ENCODE measurements at regions of chr2 and their contacts with region 1.

Region 1: GRCh38 chr2:86035883-86036668 is 69.6 kb downstream of the POLR1A start:
- DNase-seq: peak; percentile 65
- H3K4me3 Mint-ChIP-seq: peak overlapping the region; percentile 76
- H3K27ac Mint-ChIP-seq: peak overlapping the region; percentile 93
- H3K4me1 Mint-ChIP-seq: peaks cover 74% of the 10 kb centered on the region
- H3K27me3 Mint-ChIP-seq: no peaks in the 10 kb centered on the region

Region 2: DNA sequence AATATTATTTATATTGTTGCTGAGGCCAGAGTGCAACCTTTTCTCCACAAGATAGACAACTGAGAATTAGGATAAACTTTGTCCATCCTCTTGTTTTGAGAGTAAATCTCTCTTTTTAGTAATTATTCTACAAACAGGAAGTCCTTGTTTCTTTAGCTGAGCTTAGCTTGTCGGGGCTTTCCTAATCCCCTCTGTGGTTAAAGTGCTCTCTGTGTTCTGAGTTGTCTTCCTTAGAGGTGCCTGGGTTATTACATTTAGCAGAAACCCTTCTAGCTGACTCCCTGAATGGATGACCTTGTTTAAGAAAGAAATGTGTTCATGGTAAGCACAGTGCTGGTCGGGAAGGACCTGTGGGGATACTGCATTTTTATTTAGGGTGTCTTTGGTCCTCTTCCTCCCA is 407.4 kb before region 1 on chr2:
- intact Hi-C with region 1: no loop called
- DNase-seq: no peak
- H3K4me3 Mint-ChIP-seq: peak overlapping the region; percentile 33
- H3K27ac Mint-ChIP-seq: peak overlapping the region; percentile 79
- H3K4me1 Mint-ChIP-seq: peaks cover 25% of the 10 kb centered on the region
- H3K27me3 Mint-ChIP-seq: no peaks in the 10 kb centered on the region

Region 3: DNA sequence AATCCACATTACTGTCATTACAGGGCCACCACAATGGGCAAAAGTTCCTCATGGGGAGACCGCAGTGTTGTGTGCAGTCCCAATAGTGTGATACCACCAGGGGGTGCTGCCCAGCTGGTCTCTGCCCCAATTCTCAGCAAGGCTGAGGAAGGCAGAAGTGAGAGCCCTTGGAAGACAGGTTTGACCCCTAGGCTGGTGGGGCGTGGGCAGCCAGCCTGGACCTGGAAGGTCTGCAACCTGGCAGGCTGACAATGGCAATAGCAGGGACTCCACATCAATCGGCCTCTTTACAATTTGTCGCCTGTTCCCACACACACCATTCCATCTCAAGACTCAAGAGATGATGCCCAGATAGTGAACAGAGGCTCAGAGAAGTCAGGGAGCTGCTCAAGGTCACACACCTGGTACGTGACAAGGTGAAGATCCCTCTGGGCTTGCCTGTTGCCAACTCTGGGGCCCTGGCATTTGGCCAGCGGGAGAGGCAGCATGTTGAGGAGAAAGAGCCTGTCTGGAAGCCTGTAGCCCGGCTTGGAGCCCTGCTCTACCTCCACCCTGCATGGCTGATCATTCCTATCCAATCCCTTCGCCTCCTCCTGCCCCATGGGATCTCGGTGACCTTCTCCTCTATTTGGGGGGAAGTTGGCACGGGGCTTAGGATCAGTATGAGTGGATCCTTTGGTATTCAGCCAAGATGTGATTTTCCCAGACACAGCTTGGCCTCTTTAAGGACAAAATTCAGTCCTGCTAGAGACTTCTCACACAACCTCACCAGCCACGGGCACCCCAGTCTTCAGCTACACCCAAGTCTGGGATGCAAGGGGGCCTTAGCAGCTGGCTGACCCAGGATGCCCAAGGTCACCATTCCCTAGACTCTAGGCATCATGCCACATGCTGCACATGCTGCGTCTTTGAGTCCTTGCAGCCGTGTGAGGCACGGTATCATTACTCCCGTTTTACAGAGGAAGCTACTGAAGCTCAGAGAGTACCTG is 285.2 kb before region 1 on chr2:
- intact Hi-C with region 1: loop called (anchors 5 kb)
- DNase-seq: peak; percentile 47
- H3K4me3 Mint-ChIP-seq: no peak overlapping the region
- H3K27ac Mint-ChIP-seq: no peak overlapping the region
- H3K4me1 Mint-ChIP-seq: peaks cover 13% of the 10 kb centered on the region
- H3K27me3 Mint-ChIP-seq: peaks cover 52% of the 10 kb centered on the region

Region 4: DNA sequence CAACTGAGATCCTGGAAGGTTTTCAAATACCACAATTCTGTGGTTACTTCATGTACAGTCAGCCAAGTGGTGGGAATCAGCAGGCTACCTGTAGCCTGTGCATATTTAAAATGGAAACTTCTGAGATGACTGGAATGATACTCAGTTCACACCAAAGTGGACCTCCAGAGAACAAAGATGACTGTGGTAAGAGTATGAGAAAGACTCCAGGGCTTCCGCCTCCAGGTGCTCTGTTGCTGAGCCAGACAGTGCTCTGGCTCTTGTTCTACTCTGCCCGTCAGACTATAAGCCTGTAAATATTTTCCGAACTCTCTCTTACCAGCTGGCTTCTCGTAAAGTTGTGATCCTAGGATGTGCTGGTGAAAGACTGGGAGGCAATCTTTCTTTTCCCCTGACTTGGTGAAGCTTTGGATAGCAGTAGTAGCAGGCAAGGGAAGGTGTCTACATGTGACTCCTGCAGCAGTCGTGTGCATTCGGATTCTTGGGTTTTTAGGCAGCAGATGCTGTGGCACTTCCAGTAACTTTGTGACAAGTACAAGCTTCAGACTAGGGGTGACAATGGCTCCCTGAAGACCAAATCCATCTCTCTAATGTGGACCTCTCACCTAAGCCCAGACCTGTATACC is 170.4 kb before region 1 on chr2:
- intact Hi-C with region 1: loop called (anchors 1 kb)
- DNase-seq: no peak
- H3K4me3 Mint-ChIP-seq: no peak overlapping the region
- H3K27ac Mint-ChIP-seq: peak overlapping the region; percentile 35
- H3K4me1 Mint-ChIP-seq: peaks cover 49% of the 10 kb centered on the region
- H3K27me3 Mint-ChIP-seq: no peaks in the 10 kb centered on the region

Region 5: GRCh38 chr2:85963068-85963467 is 73.0 kb before region 1 on chr2:
- intact Hi-C with region 1: loop called (anchors 2 kb)
- DNase-seq: no peak
- H3K4me3 Mint-ChIP-seq: peak overlapping the region; percentile 1
- H3K27ac Mint-ChIP-seq: no peak overlapping the region
- H3K4me1 Mint-ChIP-seq: peaks cover 26% of the 10 kb centered on the region
- H3K27me3 Mint-ChIP-seq: peaks cover 3% of the 10 kb centered on the region

Region 6: GRCh38 chr2:86079981-86080911 is 44.2 kb after region 1 on chr2:
- intact Hi-C with region 1: loop called (anchors 1 kb)
- DNase-seq: peak; percentile 73
- H3K4me3 Mint-ChIP-seq: no peak overlapping the region
- H3K27ac Mint-ChIP-seq: peak overlapping the region; percentile 71
- H3K4me1 Mint-ChIP-seq: peaks cover 47% of the 10 kb centered on the region
- H3K27me3 Mint-ChIP-seq: no peaks in the 10 kb centered on the region

Region 7: GRCh38 chr2:86118133-86118532 is 82.1 kb after region 1 on chr2:
- intact Hi-C with region 1: no loop called
- DNase-seq: no peak
- H3K4me3 Mint-ChIP-seq: no peak overlapping the region
- H3K27ac Mint-ChIP-seq: no peak overlapping the region
- H3K4me1 Mint-ChIP-seq: no peaks in the 10 kb centered on the region
- H3K27me3 Mint-ChIP-seq: no peaks in the 10 kb centered on the region

Region 8: DNA sequence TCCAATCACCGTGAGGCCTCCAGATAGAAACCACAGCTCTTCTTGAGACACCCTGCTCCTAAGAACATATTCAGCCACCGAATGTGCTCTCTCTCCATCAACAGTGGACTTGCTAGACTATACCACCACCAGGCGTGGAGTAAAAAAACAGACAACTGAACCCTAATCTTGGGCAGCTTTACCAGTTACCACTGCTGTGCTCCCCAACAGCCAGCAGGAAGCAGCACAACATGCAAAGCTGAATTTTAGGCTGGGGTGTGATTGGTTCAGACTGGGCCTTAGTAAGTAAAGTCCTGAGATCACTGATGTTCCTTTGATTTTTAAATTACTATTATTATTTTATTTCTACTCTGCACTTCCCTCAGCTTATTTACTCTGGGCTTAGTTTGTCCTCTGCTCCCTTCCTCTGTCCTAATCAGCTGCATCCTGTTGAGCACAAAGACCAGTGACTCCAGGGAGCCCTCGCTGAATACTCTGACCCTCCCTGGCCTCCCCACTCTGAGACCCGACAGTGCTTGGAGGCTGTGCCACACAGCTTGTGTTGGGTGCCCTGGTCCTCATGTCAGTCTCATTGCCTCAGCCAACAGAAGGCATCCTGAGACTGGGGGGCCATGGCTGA is 185.1 kb after region 1 on chr2:
- intact Hi-C with region 1: no loop called
- DNase-seq: peak; percentile 20
- H3K4me3 Mint-ChIP-seq: no peak overlapping the region
- H3K27ac Mint-ChIP-seq: no peak overlapping the region
- H3K4me1 Mint-ChIP-seq: peaks cover 51% of the 10 kb centered on the region
- H3K27me3 Mint-ChIP-seq: no peaks in the 10 kb centered on the region

Region 9: DNA sequence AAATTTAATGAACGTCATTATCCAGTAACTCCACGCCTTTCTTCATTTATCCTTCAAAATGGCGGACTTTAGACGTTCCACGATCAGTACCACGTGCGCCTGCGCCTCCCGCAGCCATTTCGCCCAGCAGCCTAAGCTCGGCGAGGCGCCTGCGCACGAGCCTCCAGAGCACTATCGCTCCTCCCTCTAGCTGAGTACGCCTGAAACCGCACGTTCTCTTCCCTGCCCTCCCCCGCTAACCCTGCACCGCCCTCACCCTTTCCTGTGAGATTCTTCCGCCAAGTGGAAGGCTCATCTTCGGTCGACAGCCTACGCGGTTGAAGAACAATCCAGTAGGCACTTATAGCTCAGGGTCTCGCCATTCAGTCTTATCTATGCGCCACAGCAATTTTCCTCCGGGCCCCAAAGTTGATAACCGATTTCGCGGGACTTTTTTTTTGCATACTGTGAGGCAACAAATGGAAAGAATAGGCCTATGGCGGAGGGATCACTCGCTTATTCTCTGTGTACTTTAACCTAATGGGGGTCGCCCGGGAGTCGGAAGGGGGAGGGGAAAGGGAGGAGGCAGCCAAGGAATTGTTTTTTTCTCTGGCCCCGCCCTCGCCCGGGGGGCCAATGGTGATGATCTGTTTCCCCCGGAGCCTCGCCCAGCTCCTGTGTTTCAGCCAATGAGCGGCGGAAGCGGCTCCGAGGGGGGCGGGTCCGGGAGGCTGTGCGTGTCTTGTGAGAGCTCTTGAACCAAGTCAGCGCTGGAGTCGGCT is 404.7 kb after region 1 on chr2 and contains the start of gene KDM3A:
- intact Hi-C with region 1: loop called (anchors 5 kb)
- DNase-seq: peak; percentile 99
- H3K4me3 Mint-ChIP-seq: peak within 1 kb of the TSS; percentile 96
- H3K27ac Mint-ChIP-seq: peak within 1 kb of the TSS; percentile 98
- H3K4me1 Mint-ChIP-seq: peaks cover 50% of the 10 kb centered on the region
- H3K27me3 Mint-ChIP-seq: peaks cover 11% of the 10 kb centered on the region
- total RNA-seq, gene KDM3A: 61.6 and 67.3 TPM in 2 replicates

Measured in activated T-helper 1 cell treated with anti-CD3 and anti-CD28 coated beads, Interleukin-12 subunit alpha, Interleukin-12 subunit beta, Interleukin-2, Interleukin-4 antibody, amounts not matched to agents 30 ng/mL and 10 ng/mL and 1 ng/mL, durations not matched to agents 14 hours and 24 hours and 36 hours (primary cell).